Vagina (tissue), 2 donors: ENCODE measurements at regions of chr20 and their contacts with region 1.

Region 1: GRCh38 chr20:24303381-24303780 is 166.0 kb upstream of the SYNDIG1 start:
- DNase-seq: peak in 1 of 2 donors; percentile 27
- H3K4me3 ChIP-seq: no peak overlapping the region
- H3K27ac ChIP-seq: no peak overlapping the region
- H3K4me1 ChIP-seq: no peaks in the 10 kb centered on the region
- H3K27me3 ChIP-seq: no peaks in the 10 kb centered on the region
- CTCF ChIP-seq: no peak
- POLR2A ChIP-seq: no peak

Region 2: GRCh38 chr20:24600046-24600445 is 296.7 kb after region 1 on chr20:
- intact Hi-C with region 1: no loop called
- DNase-seq: no peak
- H3K4me3 ChIP-seq: no peak overlapping the region
- H3K27ac ChIP-seq: no peak overlapping the region
- H3K4me1 ChIP-seq: no peaks in the 10 kb centered on the region
- H3K27me3 ChIP-seq: no peaks in the 10 kb centered on the region
- CTCF ChIP-seq: no peak
- POLR2A ChIP-seq: no peak

Region 3: DNA sequence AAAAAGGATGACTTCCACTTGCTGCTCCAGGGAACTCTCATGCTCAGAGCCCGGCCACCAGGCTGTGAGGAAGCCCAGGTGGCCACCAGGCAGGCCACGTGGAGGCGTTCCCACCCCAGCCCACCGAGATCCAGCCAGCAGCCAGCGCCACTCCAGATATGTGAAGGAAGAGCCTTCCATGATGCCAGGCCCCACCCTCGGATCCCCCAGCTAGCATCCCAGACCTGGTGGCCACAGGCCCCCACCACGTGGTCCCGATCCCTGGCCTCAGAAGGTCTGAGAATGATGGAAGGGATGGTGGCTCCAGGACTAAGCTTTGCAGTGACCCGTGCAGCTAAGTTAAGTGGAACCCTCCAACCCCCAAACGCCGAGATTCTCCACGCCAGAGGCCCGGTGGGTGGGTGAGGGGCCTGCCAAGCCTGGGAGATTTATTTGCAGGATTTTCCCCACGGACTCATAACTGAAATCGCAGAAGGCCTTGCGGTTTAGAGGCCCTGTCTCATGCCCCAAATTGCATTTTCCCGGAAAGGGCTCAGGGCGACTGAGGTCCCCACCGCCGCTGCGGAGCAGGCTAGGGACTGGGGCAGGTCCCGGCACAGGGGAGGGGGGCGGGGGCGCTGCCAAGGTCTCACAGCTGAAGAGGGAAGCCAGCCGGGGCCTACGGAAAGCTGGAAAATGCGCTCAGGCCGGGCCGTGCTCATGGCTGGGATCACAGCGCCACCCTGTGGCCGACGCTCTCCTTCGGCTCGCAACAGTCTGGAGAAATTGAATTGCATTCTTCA is 614.6 kb after region 1 on chr20:
- intact Hi-C with region 1: loop called (anchors 5 kb)
- DNase-seq: no peak
- H3K4me3 ChIP-seq: no peak overlapping the region
- H3K27ac ChIP-seq: no peak overlapping the region
- H3K4me1 ChIP-seq: peaks cover 4% of the 10 kb centered on the region
- H3K27me3 ChIP-seq: no peaks in the 10 kb centered on the region
- CTCF ChIP-seq: peak; percentile 37 to 83 (median 71)
- POLR2A ChIP-seq: no peak